ENCODE measurements at regions of chr9 and their contacts with region 1.

Region 1: GRCh38 chr9:5857928-5858327 is 25.0 kb upstream of the ERMP1 start:
- DNase-seq: no peak
- ATAC-seq: no peak
- H3K4me3 ChIP-seq: no peak overlapping the region
- H3K4me3 Mint-ChIP-seq: no peak overlapping the region
- H3K27ac ChIP-seq: no peak overlapping the region
- H3K27ac Mint-ChIP-seq: no peak overlapping the region
- H3K4me1 ChIP-seq: peaks cover 0 to 5% of the 10 kb centered on the region in 2 experiments
- H3K4me1 Mint-ChIP-seq: peaks cover 12% of the 10 kb centered on the region in 3 donors
- H3K27me3 ChIP-seq: no peaks in the 10 kb centered on the region
- H3K27me3 Mint-ChIP-seq: no peaks in the 10 kb centered on the region

Region 2: DNA sequence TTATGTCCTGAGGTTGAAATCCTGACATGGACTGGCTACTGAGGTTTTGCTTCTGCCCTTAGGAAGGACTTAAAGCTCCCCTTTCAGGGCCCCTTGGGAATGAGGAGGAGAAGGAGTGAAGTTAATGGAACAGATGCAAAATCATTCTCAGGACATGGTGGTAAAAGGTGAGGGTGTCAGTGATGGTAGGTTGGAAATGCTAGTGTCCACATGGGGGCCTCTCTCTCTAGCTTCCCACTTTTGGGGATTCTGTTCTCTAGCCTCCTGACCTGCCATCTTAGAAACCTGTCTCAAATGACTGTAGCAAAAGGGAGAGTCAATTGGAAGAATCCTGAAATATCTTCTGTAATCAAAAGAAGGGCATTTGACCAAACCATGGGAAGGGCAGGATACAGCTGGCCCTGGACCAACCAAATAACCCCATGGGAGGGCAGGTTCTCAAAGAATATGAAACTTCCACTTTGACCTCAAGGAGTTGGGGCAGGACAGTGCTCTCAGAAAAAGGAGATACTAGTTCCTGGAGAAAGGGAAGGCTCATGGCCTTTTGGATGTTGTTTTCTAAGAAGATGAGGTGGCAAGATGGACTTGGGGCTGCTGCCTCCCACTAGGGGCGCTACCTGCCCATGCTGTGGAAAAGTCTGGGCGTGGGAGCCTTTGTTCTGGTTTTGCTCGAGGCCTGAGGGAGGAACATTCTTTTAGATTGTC is 11.5 kb after region 1 on chr9:
- CTCF ChIA-PET with region 1: no interaction called
- POLR2A ChIA-PET with region 1: no interaction called
- DNase-seq: peak in 10 of 35 experiments; percentile 2 to 34 (median 12)
- ATAC-seq: peak in 1 of 4 experiments; percentile 36
- H3K4me3 ChIP-seq: no peak overlapping the region
- H3K4me3 Mint-ChIP-seq: no peak overlapping the region
- H3K27ac ChIP-seq: no peak overlapping the region
- H3K27ac Mint-ChIP-seq: no peak overlapping the region
- H3K4me1 ChIP-seq: peaks cover 0 to 6% of the 10 kb centered on the region in 2 experiments
- H3K4me1 Mint-ChIP-seq: peaks cover 10 to 18% (median 15%) of the 10 kb centered on the region in 3 donors
- H3K27me3 ChIP-seq: no peaks in the 10 kb centered on the region
- H3K27me3 Mint-ChIP-seq: no peaks in the 10 kb centered on the region

Region 3: DNA sequence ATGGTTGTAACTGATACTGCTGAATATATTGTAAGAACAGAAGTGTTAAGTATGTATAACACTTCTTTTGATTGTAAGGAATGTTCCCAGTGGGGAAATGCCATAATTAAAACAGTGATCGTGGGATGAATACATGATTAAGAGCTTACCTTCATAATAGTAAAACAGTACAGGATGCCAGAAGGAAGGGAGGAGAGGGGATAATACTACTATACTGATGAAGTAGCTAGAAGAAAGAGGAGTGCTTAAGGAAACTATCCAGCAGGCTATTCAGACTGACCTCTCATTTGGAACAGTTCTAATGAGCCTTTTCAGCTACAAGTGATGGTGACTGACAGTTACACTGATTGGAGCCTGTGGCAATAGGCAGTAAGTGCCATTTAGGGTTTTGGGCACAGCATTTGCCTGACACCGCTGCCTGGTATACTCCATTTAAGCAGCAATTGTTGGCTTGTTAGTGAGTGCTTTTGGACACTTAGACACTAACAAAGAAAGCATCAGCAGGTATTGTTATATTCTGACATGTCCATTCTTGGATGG is 866.0 kb after region 1 on chr9:
- CTCF ChIA-PET with region 1: no interaction called
- POLR2A ChIA-PET with region 1: interaction called in 1 of 2 experiments, 10 read pairs
- DNase-seq: no peak
- ATAC-seq: no peak
- H3K4me3 ChIP-seq: no peak overlapping the region
- H3K4me3 Mint-ChIP-seq: no peak overlapping the region
- H3K27ac ChIP-seq: no peak overlapping the region
- H3K27ac Mint-ChIP-seq: no peak overlapping the region
- H3K4me1 ChIP-seq: no peaks in the 10 kb centered on the region
- H3K4me1 Mint-ChIP-seq: no peaks in the 10 kb centered on the region
- H3K27me3 ChIP-seq: peaks cover 0 to 3% of the 10 kb centered on the region in 2 experiments
- H3K27me3 Mint-ChIP-seq: peaks cover 0 to 3% of the 10 kb centered on the region in 2 donors